HepG2 (cell line): ENCODE measurements at regions of chr17 and their contacts with region 1.

Region 1: DNA sequence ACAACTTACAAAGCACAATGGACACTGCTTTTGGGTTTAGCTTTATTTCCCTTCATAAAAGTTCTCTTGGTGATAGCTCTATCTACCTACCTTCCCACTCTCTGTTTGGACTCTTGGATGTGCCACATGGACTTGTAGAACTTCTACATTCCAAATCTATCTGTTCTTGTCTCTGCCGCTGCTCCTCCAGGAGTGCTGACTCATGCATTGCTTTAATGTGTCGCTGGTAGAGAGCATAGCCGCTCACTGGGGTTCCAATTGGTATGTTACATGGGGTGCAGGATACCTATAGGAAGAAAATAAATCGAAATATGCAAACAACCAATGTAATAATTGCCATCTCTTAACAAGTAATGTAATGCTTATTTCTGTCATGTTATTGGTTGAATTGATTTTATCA is 92.1 kb downstream of the TTC19 start:
- DNase-seq: no peak
- ATAC-seq: no peak
- H3K4me3 ChIP-seq: no peak overlapping the region
- H3K27ac ChIP-seq: no peak overlapping the region
- H3K4me1 ChIP-seq: no peaks in the 10 kb centered on the region
- H3K27me3 ChIP-seq: no peaks in the 10 kb centered on the region
- CTCF ChIP-seq: no peak
- EP300 ChIP-seq: no peak
- POLR2A ChIP-seq: no peak
- RAD21 ChIP-seq: no peak

Region 2: DNA sequence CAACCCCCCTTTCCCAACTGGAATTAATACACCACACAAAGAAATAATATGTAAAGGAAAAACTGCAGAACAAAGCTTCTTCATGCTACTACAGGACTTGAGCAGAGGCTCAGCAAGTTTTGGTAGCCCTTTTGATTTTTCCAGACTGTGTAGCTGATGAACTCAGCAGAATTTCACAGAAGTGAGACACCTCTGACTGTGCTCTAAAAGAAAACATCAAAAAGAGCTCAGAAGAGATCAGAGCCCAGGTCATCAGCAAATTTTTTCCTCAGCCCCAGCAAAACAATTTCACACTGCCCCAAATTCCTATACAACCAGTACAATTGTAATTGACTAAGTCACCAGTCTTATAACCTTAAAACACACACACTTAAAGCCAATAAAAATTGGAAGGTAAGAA is 54.1 kb before region 1 on chr17:
- CTCF ChIA-PET with region 1: no interaction called
- POLR2A ChIA-PET with region 1: no interaction called
- in situ Hi-C with region 1: loop called (anchors 10 kb)
- intact Hi-C with region 1: no loop called
- DNase-seq: no peak
- ATAC-seq: no peak
- H3K4me3 ChIP-seq: no peak overlapping the region
- H3K27ac ChIP-seq: peak overlapping the region; percentile 43
- H3K4me1 ChIP-seq: peaks cover 43% of the 10 kb centered on the region
- H3K27me3 ChIP-seq: no peaks in the 10 kb centered on the region
- CTCF ChIP-seq: no peak
- EP300 ChIP-seq: no peak
- POLR2A ChIP-seq: no peak
- RAD21 ChIP-seq: no peak

Region 3: DNA sequence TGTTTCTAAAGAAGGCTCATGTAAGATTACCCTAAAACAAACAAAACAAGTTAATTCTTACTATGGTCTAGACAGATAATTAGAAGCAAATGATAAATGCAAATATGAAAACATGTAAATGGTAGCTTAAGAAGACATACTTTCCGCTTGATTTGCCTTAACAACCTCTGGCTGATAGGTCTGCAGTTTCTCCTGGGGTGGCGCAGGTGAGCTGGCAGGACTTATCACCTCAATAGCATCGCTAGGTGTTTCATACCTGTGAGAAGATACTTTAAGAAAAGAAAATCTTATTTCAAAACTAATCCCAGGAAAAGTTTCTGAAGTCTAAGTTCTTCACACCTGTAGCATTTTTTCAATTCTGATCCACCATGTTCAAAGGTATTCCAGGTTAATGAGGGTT is 33.4 kb before region 1 on chr17:
- CTCF ChIA-PET with region 1: no interaction called
- POLR2A ChIA-PET with region 1: no interaction called
- in situ Hi-C with region 1: no loop called
- intact Hi-C with region 1: no loop called
- DNase-seq: no peak
- ATAC-seq: no peak
- H3K4me3 ChIP-seq: no peak overlapping the region
- H3K27ac ChIP-seq: no peak overlapping the region
- H3K4me1 ChIP-seq: no peaks in the 10 kb centered on the region
- H3K27me3 ChIP-seq: no peaks in the 10 kb centered on the region
- CTCF ChIP-seq: no peak
- EP300 ChIP-seq: no peak
- POLR2A ChIP-seq: no peak
- RAD21 ChIP-seq: no peak